CD8-positive, alpha-beta memory T cell (primary cell): ENCODE measurements at regions of chr20 and their contacts with region 1.

Region 1: GRCh38 chr20:32357869-32358631 is at the start of gene ASXL1:
- DNase-seq: peak; percentile 89 to 94 (median 90)
- H3K4me3 ChIP-seq: peak within 1 kb of the TSS; percentile 97
- H3K4me3 Mint-ChIP-seq: peak within 1 kb of the TSS; percentile 93 to 98 (median 97)
- H3K27ac ChIP-seq: peak within 1 kb of the TSS; percentile 88
- H3K27ac Mint-ChIP-seq: peak within 1 kb of the TSS; percentile 97 to 99 (median 98)
- H3K4me1 ChIP-seq: peaks cover 41% of the 10 kb centered on the region
- H3K4me1 Mint-ChIP-seq: peaks cover 38 to 53% (median 48%) of the 10 kb centered on the region in 3 donors
- H3K27me3 ChIP-seq: no peaks in the 10 kb centered on the region
- H3K27me3 Mint-ChIP-seq: peaks cover 0 to 9% of the 10 kb centered on the region in 2 donors
- total RNA-seq, gene ASXL1: 131 to 133 TPM

Region 2: GRCh38 chr20:32396646-32397160 is 38.7 kb after region 1 on chr20:
- CTCF ChIA-PET with region 1: interaction called, 3 read pairs
- POLR2A ChIA-PET with region 1: interaction called, 15 read pairs
- DNase-seq: no peak
- H3K4me3 ChIP-seq: no peak overlapping the region
- H3K4me3 Mint-ChIP-seq: no peak overlapping the region
- H3K27ac ChIP-seq: no peak overlapping the region
- H3K27ac Mint-ChIP-seq: peak overlapping the region in 1 of 8 donors; percentile 46
- H3K4me1 ChIP-seq: peaks cover 9% of the 10 kb centered on the region
- H3K4me1 Mint-ChIP-seq: peaks cover 39 to 63% (median 53%) of the 10 kb centered on the region in 3 donors
- H3K27me3 ChIP-seq: no peaks in the 10 kb centered on the region
- H3K27me3 Mint-ChIP-seq: peaks cover 0 to 1% of the 10 kb centered on the region in 2 donors

Region 3: DNA sequence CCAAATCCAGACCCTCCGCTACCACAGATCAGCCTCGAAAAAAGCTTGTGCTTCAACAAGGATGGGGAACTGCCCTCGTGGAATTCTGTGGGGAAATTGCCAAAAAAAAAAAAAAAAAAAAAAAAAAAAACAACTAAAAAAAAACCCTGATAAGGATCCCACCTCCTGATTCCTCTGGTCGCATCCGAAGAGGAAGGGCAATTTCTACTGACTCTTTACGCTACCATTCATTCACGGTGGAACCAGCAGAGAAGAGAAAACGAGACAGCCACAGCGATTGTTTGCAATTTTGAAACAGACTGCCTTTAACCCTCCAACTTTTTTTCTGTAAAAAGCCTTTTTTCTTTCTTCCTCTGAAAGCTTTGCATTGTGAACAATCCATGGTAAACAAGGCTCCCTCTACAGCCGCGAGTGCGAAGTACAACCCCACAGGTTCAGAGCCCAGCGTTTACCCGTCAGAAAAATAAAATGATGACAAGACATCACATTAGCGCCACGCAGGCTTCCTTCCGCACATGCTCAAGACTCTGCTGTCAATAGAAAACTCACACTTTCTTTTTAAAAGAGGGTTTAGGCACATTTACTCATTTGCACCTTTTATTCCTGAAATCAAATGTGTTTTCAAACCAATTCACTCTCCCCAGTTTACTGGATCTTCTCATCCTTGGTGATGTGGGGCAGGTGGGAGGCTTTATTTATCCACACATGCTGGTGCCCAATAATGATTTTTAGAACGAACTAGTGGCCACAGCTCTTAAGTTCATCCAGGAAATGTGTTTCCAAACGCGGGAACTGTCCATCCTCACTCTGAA is 127.1 kb after region 1 on chr20:
- CTCF ChIA-PET with region 1: no interaction called
- POLR2A ChIA-PET with region 1: interaction called, 10 read pairs
- DNase-seq: peak; percentile 61 to 89 (median 77)
- H3K4me3 ChIP-seq: peak overlapping the region; percentile 69
- H3K4me3 Mint-ChIP-seq: peak overlapping the region; percentile 88 to 96 (median 93)
- H3K27ac ChIP-seq: no peak overlapping the region
- H3K27ac Mint-ChIP-seq: peak overlapping the region; percentile 87 to 97 (median 92)
- H3K4me1 ChIP-seq: peaks cover 39% of the 10 kb centered on the region
- H3K4me1 Mint-ChIP-seq: peaks cover 30 to 48% (median 38%) of the 10 kb centered on the region in 3 donors
- H3K27me3 ChIP-seq: no peaks in the 10 kb centered on the region
- H3K27me3 Mint-ChIP-seq: no peaks in the 10 kb centered on the region